ENCODE measurements at regions of chr7 and their contacts with region 1.

Region 1: DNA sequence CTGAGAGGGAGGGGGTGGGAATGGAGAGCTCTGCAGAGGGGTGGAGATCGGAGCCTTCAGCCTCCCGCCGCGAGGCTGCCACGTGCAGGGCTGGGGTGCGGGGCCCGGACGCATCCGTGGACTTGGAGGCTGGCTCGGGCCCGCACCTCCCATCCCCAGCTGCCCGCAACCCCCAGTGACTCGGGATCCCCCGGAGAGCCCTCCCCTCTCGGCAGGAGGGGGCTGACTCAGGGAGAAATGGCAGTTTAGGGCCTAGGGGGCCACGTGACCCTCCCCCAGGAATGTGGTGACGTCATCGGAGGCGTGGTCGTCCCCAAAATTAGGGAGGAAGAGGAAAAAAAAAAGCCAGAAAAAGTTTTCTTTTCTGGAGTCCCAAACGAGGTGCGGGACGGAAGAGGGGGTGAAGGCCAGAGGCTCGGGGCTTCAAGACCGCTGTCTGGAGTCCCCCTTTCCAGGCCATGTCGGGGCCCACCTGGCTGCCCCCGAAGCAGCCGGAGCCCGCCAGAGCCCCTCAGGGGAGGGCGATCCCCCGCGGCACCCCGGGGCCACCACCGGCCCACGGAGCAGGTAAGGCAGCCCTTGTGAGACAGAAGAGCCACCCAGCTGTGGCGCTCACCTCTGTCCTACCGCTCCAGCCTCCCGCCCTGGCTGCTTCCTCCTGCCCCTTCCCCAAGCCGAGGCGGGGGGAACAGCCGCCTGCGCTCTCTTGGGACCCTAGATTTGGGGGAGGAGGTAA is at the start of gene TRIP6:
- DNase-seq: no peak
- ATAC-seq: peak; percentile 55
- H3K4me3 ChIP-seq: no peak within 1 kb of the TSS
- H3K27ac ChIP-seq: peak within 1 kb of the TSS; percentile 41; the same call in 1 of the 2 replicates
- H3K4me1 ChIP-seq: peaks cover 10% of the 10 kb centered on the region
- H3K27me3 ChIP-seq: no peaks in the 10 kb centered on the region
- CTCF ChIP-seq: no peak
- total RNA-seq, gene TRIP6: 3.2 TPM

Region 2: GRCh38 chr7:100837099-100837836 is 29.9 kb before region 1 on chr7:
- CTCF ChIA-PET with region 1: no interaction called
- POLR2A ChIA-PET with region 1: interaction called, 12 read pairs
- in situ Hi-C with region 1: no loop called
- intact Hi-C with region 1: no loop called
- DNase-seq: no peak
- ATAC-seq: no peak
- H3K4me3 ChIP-seq: no peak overlapping the region
- H3K27ac ChIP-seq: no peak overlapping the region
- H3K4me1 ChIP-seq: peaks cover 10% of the 10 kb centered on the region
- H3K27me3 ChIP-seq: no peaks in the 10 kb centered on the region
- CTCF ChIP-seq: no peak

Region 3: DNA sequence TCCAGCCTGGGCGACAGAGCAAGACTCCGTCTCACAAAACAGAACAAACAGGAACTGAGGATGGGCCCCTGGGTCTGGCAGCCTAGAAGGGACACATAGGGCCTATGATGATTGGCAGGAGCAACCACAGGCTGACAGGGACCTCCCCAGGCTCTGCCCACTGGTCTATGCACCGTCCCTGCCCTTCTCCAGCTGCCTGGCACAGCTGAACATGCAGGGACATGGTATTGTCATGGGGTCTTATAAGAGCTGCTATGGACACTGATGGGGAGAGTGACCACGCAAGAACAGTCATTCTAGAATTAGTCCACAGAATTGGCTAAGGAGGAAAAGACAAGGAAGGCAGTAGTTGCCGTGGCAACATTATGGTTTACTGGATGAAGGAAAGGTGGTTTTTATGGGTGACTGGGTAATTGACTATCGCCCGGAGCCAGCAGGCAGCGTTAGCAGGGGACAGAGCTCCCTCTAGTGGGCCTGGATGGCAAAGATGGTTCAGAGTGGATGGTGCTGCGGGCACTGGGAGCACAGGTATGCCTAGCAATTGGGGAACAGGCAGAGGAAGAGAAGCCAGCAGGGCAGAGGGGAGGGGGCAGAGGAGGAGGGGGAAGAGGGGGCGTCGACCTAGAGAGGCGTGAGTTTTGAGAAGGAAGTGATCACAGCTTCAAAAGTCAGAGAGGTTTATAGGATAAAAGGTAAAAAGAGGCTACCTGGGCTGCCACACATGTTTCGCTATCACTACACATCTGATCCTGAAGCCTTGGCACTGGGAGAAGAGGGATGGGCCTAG is 210.3 kb after region 1 on chr7:
- CTCF ChIA-PET with region 1: no interaction called
- POLR2A ChIA-PET with region 1: no interaction called
- in situ Hi-C with region 1: no loop called
- intact Hi-C with region 1: no loop called
- DNase-seq: no peak
- ATAC-seq: peak; percentile 99
- H3K4me3 ChIP-seq: no peak overlapping the region
- H3K27ac ChIP-seq: no peak overlapping the region; the same call in 1 of the 2 replicates
- H3K4me1 ChIP-seq: peaks cover 3% of the 10 kb centered on the region; the same call in 1 of the 2 replicates
- H3K27me3 ChIP-seq: no peaks in the 10 kb centered on the region
- CTCF ChIP-seq: peak; percentile 97

Region 4: GRCh38 chr7:102093287-102094001 is 1226.2 kb after region 1 on chr7:
- CTCF ChIA-PET with region 1: no interaction called
- POLR2A ChIA-PET with region 1: interaction called, 12 read pairs
- in situ Hi-C with region 1: no loop called
- intact Hi-C with region 1: no loop called
- DNase-seq: no peak
- ATAC-seq: no peak
- H3K4me3 ChIP-seq: no peak overlapping the region
- H3K27ac ChIP-seq: no peak overlapping the region
- H3K4me1 ChIP-seq: no peaks in the 10 kb centered on the region
- H3K27me3 ChIP-seq: no peaks in the 10 kb centered on the region
- CTCF ChIP-seq: no peak

Measured in Panc1 (cell line).